Astrocyte of the cerebellum (primary cell): ENCODE measurements at regions of chr1 and their contacts with region 1.

Region 1: DNA sequence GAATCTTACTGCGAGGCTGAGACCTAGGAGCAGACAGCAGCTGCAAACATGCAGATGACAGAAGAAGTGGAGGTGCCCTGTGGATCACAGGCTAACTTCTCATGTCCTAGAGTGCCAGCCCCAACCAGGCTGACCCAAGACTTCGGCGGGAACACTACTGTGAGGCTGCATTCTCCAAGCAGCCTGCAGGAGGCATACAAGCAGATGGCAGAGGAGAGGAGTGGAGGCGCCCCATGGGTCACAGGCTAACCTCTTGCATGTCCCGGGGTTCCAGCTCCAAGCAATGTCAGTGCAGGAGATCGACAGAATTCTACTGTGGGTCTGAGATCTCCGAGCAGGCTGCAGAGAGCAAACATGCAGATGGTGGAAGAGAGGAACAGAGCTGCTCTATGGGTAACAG is 98.1 kb upstream of the ZNF678 start:
- DNase-seq: no peak
- H3K4me3 ChIP-seq: no peak overlapping the region
- CTCF ChIP-seq: no peak

Region 2: DNA sequence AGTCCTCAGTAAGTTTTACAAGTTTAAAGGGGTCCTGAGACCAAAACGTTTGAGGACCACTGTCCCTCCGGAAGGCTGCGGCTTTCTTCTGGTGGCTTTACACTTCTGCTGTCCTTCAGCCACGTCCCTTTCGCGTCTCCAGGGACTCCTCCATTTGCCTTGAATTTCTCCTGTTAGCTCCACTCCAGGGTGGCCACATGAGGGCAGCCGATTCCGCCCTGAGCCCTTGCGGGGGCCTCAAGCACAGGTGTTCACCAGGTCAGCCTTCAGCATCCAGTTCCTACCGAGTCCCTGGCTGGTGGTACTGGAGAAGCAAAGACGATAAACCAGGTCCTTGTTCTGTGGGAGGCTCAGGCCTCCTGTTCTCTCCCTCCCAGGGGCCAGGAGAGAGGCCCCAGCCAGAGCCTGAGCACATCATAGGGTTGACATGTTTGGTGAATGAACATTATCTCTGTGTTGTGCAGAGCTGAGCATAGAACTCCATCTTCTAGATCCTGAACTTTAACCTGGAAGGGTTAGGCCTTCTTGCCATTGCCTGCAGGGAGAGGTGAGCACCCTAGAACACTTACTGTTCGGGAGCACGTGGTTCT is 552.6 kb before region 1 on chr1:
- in situ Hi-C with region 1: loop called (anchors 25 kb)
- DNase-seq: no peak
- H3K4me3 ChIP-seq: no peak overlapping the region
- CTCF ChIP-seq: peak; percentile 61

Region 3: GRCh38 chr1:227197064-227197463 is 268.2 kb before region 1 on chr1:
- in situ Hi-C with region 1: no loop called
- DNase-seq: no peak
- H3K4me3 ChIP-seq: no peak overlapping the region
- CTCF ChIP-seq: no peak

Region 4: GRCh38 chr1:227563324-227564201 is 98.3 kb after region 1 on chr1 and contains the start of gene ZNF678:
- in situ Hi-C with region 1: loop called (anchors 5 kb)
- DNase-seq: peak; percentile 86
- H3K4me3 ChIP-seq: peak within 1 kb of the TSS; percentile 72
- CTCF ChIP-seq: no peak